Activated naive CD4-positive, alpha-beta T cell treated with anti-CD3 and anti-CD28 coated beads, Interleukin-2, amount 10 ng/mL, durations not matched to agents 7 days and 5 days (primary cell): ENCODE measurements at regions of chr3 and their contacts with region 1.

Region 1: GRCh38 chr3:196518966-196519717 is 4.0 kb upstream of the SMCO1 start:
- DNase-seq: peak; percentile 75
- H3K4me3 Mint-ChIP-seq: no peak overlapping the region
- H3K27ac Mint-ChIP-seq: no peak overlapping the region
- H3K4me1 Mint-ChIP-seq: no peaks in the 10 kb centered on the region
- H3K27me3 Mint-ChIP-seq: peaks cover 9% of the 10 kb centered on the region

Region 2: GRCh38 chr3:196251918-196252317 is 267.2 kb before region 1 on chr3:
- CTCF ChIA-PET with region 1: interaction called, 46 read pairs
- DNase-seq: no peak
- H3K4me3 Mint-ChIP-seq: no peak overlapping the region
- H3K27ac Mint-ChIP-seq: peak overlapping the region; percentile 24
- H3K4me1 Mint-ChIP-seq: peaks cover 5% of the 10 kb centered on the region
- H3K27me3 Mint-ChIP-seq: no peaks in the 10 kb centered on the region

Region 3: DNA sequence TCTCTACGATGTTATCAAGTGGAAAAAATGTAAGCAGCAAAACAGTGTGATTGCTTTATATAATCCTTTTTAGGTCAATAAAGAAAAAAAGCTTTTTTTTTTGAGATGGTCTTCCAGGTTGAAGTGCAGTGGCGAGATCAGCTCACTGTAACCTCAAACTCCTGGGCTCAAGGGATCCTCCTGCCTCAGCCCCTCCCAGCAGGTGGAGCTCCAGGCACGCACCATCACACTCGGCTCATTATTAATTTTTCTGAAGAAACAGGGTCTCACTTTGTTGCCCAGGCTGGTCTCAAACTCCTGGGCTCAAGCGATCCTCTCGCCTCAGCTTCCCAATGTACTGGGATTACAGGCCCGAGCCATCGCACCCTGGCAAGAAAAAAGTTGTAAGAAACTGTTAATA is 32.9 kb before region 1 on chr3:
- CTCF ChIA-PET with region 1: interaction called, 26 read pairs
- DNase-seq: peak; percentile 39
- H3K4me3 Mint-ChIP-seq: no peak overlapping the region
- H3K27ac Mint-ChIP-seq: no peak overlapping the region
- H3K4me1 Mint-ChIP-seq: peaks cover 11% of the 10 kb centered on the region
- H3K27me3 Mint-ChIP-seq: no peaks in the 10 kb centered on the region